Thyroid gland (tissue), 4 donors: ENCODE measurements at regions of chr10 and their contacts with region 1.

Region 1: DNA sequence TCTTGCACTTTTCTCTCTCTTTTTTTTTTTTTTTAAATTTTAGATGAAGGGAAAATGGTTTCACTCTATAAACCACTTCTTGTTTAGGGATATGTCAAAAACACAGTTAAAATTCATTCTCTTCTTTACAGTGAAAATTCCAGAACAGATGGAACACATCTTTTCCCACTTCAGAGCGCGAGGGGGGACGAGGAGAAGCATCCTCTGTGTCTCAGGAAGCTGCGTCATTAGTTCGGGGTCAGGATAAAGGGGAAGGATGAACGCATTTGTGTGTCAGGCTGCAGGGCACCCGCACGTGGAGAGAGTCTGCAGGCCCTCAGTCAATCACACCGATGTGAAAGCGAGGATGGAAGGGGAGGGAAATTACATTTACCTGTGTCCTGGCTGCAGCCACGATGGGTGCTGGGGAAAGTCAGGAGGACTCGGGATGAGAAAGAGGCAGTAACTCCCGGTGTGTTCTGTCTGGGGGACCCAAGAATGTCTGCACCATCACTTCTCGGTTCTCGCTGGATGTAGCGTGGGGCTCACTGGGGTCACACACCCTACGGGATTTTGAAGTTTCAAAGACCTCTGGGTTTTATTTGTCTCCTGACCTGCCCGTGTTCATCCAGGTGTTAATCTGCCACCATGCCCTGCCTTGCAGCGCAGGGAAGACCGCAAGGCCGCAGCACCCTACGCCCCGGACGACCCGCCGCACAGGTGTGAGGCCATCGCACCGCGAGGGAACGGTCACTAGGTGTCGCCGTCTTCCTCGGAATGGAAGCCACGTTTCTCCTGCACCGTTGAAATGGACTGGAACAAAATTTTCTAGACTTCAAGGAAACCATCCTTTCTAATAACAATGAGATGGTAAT is 66.7 kb upstream of the PITRM1 start:
- DNase-seq: peak; percentile 60 to 73
- H3K4me3 ChIP-seq: no peak overlapping the region
- H3K27ac ChIP-seq: peak overlapping the region in 1 of 3 donors; percentile 12
- H3K4me1 ChIP-seq: no peaks in the 10 kb centered on the region
- H3K27me3 ChIP-seq: no peaks in the 10 kb centered on the region
- CTCF ChIP-seq: peak; percentile 62 to 89 (median 82)
- POLR2A ChIP-seq: no peak

Region 2: DNA sequence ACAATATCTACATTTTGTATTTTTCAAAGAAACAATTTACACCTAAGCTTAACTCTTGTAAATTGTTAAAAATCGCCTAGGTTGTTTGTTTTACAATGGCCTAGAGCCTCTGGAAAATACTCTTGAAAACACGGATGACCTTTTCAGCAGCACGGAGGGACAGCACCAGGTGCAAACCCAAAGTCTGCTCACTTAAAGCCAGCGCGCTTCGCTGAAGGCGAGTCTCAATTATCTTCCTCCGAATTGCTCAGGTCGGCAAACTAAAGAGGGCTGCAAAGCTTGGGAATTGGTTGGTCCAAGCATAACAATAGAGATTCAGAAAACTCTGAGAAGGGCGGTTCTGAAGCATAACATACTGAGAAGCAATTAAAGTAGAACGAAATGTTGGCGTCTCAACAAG is 73.1 kb after region 1 on chr10:
- intact Hi-C with region 1: no loop called
- DNase-seq: no peak
- H3K4me3 ChIP-seq: no peak overlapping the region
- H3K27ac ChIP-seq: no peak overlapping the region
- H3K4me1 ChIP-seq: no peaks in the 10 kb centered on the region
- H3K27me3 ChIP-seq: no peaks in the 10 kb centered on the region
- CTCF ChIP-seq: no peak
- POLR2A ChIP-seq: no peak

Region 3: GRCh38 chr10:3452173-3452626 is 212.9 kb after region 1 on chr10:
- intact Hi-C with region 1: loop called (anchors 10 kb)
- DNase-seq: no peak
- H3K4me3 ChIP-seq: no peak overlapping the region
- H3K27ac ChIP-seq: peak overlapping the region; percentile 59 to 71 (median 63)
- H3K4me1 ChIP-seq: peaks cover 9 to 21% of the 10 kb centered on the region in 2 donors
- H3K27me3 ChIP-seq: no peaks in the 10 kb centered on the region
- CTCF ChIP-seq: peak in 4 of 6 experiments; percentile 37 to 40 (median 38)
- POLR2A ChIP-seq: no peak

Region 4: DNA sequence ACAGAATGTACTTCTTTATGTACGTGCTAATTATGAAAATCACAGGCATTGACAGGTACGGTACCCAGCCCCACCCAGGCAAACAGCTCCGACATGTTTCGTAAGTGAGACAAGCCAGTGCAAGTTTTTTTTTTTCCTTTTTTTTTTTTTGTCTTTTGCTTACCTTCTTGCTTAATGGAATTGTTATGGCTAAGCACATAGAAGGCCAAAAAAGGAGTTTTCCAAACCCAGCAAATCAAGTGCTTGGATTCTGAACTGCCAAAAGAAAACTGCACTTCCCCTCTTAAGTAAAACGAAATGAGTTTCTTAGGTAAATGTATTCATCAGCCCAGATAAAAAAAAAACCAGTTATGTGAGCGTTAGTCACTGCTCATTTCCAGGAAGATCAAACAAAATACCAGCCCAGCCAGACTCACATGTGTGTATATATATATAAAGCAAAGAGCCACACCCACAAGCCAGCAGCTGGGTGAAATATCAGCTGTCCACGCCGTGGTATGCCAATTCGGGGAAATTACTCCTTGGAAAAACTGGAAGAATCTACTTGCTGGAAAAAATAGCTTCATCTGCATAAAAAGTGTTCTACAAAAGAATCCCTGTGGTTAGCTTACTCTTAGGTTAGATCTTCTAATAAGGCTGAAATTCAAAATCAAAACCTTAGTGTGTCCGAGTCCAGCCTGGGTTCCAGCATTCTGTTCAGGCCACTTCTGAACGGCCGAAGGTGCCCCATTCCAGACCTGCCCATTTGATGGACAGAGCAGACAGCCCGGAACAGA is 537.7 kb after region 1 on chr10:
- intact Hi-C with region 1: loop called (anchors 10 kb)
- DNase-seq: peak in 1 of 2 donors; percentile 18
- H3K4me3 ChIP-seq: no peak overlapping the region
- H3K27ac ChIP-seq: peak overlapping the region; percentile 75 to 100 (median 100)
- H3K4me1 ChIP-seq: peaks cover 29 to 59% of the 10 kb centered on the region in 2 donors
- H3K27me3 ChIP-seq: no peaks in the 10 kb centered on the region
- CTCF ChIP-seq: no peak
- POLR2A ChIP-seq: peak in 1 of 2 donors; percentile 28

Region 5: DNA sequence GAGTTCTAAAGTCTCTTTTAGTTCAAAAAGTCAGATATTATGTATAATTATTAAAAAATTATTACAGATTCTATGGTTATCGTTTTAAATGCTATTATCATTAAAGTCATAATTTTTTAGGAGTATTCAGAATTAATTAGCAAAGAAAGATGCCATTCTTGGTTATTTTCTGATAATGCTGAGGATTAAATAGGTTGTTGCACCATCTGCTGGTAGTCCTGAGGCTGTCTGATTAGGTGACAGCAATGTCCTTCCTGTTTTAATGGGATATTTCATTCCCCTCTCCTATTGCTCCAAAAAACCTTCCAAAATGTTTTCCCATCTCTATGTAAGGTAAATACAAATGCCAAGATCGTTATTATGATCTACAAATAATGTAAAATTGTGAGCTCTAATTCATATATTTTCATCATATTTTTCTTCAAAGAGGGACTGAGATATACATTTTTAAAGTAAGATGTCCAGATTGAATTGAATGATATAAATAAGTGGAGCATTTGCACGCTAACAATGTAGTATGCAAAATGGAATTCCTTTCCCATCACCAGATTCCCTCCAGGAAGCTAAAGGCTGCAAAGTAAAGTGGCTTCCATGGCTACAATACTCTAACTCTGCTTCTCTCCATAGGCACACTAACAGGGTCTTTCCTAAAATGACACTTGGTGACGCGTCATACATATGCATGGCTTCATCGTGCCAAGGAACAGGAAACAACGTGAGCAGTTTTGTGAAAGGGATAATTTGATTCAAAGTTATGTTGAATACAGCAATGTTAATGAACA is 1527.9 kb after region 1 on chr10:
- intact Hi-C with region 1: loop called (anchors 10 kb)
- DNase-seq: peak; percentile 10 to 22
- H3K4me3 ChIP-seq: no peak overlapping the region
- H3K27ac ChIP-seq: no peak overlapping the region
- H3K4me1 ChIP-seq: peaks cover 0 to 8% of the 10 kb centered on the region in 2 donors
- H3K27me3 ChIP-seq: no peaks in the 10 kb centered on the region
- CTCF ChIP-seq: peak; percentile 52 to 67 (median 64)
- POLR2A ChIP-seq: no peak